Activated naive CD4-positive, alpha-beta T cell treated with anti-CD3 and anti-CD28 coated beads for 36 hours (primary cell): ENCODE measurements at regions of chr20 and their contacts with region 1.

Region 1: DNA sequence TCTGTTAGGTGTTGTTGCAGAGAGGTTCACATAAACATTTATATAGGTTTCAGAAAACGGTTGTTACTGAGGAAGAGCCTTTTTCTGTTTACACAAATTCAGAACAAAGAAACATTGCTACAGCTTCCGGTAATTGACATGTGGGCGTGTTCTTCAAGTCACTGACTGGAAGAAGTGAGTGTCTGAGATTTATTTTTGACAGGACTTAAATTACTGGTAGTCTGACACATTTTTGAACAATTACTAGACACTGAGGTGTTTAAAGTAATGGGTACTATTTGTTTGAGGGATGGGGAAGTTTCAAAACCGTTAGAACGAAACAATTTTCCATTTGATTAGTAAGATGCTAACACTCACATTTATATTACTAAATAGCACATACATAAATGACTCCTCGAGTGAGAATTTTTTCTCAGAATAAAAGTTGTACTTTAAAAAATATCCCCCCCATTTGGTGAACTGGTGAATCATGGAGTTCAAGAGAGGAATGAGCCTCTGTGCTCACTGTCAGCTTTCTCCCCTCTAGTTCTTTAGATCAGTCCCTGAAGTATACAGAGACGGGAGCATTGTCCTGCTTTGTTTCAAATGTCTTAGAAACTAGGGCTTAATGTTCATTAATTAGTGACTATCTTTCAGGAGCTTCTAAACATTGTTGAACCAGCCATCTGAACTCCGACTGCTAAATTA is 98.7 kb downstream of the TSHZ2 start:
- DNase-seq: peak; percentile 80
- H3K4me3 Mint-ChIP-seq: peak overlapping the region; percentile 18
- H3K27ac Mint-ChIP-seq: peak overlapping the region; percentile 98
- H3K4me1 Mint-ChIP-seq: peaks cover 63% of the 10 kb centered on the region
- H3K27me3 Mint-ChIP-seq: no peaks in the 10 kb centered on the region

Region 2: DNA sequence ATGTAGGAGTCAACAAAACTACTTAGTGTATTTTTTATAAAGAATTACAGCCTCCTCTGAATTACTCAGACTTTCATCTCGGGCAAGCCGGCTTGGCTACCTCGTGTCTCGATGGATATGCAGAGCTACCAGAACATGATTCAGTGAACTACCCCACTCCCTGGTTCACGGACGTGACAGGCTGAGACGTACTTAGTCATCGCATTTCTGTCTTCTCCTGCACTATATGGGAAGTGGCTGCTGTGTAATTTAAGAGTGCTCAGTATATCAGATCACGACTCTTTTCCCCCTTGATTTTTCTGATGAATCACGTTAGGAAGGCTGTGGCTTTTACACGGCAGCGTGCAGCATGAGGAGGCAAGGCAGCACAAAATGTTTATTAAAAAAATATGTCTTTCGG is 576.6 kb before region 1 on chr20:
- CTCF ChIA-PET with region 1: no interaction called
- intact Hi-C with region 1: loop called (anchors 1 kb)
- DNase-seq: peak; percentile 82
- H3K4me3 Mint-ChIP-seq: peak overlapping the region; percentile 46
- H3K27ac Mint-ChIP-seq: peak overlapping the region; percentile 50
- H3K4me1 Mint-ChIP-seq: peaks cover 23% of the 10 kb centered on the region
- H3K27me3 Mint-ChIP-seq: no peaks in the 10 kb centered on the region

Region 3: DNA sequence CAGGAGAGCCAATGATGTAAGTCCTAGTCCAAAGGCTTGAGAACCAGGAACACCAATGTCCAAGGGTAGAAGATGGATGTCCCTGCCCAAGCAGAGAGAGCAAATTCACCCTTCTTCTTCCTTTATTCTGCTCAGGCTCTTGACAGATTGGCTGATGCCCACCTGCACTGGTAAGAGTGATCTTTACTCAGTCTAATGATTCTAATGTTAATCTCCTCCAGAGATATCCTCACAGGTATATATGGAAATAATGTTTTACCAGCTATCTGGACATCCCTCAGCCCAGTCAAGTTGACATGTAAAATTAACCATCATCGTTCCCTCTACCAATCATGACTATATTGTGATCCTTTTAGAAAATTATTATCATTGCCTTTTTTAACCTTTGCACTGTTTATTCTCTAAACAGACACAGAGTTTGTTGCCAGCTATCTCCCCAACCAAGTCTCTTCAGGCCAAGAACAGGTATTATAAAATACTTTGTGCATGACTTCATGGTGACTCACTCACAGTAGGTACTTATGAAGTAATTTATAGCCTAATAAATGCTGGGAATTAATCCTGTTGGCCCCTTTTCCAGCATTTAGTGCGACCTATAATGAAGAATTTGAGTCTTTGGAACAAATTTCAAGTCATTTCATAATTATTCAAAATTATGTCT is 124.9 kb before region 1 on chr20:
- CTCF ChIA-PET with region 1: no interaction called
- intact Hi-C with region 1: no loop called
- DNase-seq: no peak
- H3K4me3 Mint-ChIP-seq: no peak overlapping the region
- H3K27ac Mint-ChIP-seq: no peak overlapping the region
- H3K4me1 Mint-ChIP-seq: peaks cover 4% of the 10 kb centered on the region
- H3K27me3 Mint-ChIP-seq: no peaks in the 10 kb centered on the region

Region 4: DNA sequence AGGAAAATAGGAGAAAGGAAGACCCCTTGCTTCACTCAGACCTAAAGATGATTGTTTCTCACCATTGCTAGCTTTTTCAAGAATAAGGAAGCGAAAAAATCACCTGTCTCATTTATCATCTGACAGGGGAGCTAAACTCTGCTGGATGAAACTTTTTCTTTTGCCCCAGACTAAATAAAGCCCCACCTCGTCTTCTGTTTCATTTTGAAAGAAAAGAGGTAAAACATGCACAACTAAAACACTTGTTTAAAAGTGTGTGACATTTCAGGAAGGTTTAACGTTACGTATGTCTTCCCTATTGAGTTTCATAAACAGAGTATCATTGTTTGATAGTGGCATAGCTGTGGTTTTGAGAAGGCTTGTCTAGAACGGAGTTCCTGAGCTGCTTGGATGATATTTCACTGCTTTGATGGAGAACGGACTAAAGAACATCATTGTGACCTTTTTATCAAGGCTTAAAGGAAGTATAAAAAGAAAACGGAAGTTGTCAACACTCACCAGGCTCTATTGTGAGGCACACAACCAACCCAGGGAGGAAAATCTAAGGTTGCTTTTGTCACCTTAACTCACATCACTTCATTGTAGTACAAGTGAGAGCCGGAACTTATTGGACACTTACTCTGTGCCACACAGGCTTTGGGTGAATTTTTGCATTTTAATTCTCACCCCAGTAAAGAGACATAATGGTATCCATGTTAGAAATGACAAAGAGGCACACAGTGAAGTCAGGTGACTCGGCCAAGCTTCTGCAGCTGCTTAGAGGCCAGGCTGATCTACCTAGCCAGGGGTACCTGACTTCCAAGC is 69.1 kb before region 1 on chr20:
- CTCF ChIA-PET with region 1: interaction called, 3 read pairs
- intact Hi-C with region 1: loop called (anchors 1 kb)
- DNase-seq: peak; percentile 60
- H3K4me3 Mint-ChIP-seq: peak overlapping the region; percentile 71
- H3K27ac Mint-ChIP-seq: peak overlapping the region; percentile 99
- H3K4me1 Mint-ChIP-seq: peaks cover 88% of the 10 kb centered on the region
- H3K27me3 Mint-ChIP-seq: no peaks in the 10 kb centered on the region

Region 5: GRCh38 chr20:53050338-53050737 is 20.5 kb before region 1 on chr20:
- CTCF ChIA-PET with region 1: interaction called, 3 read pairs
- intact Hi-C with region 1: loop called (anchors 1 kb)
- DNase-seq: peak; percentile 70
- H3K4me3 Mint-ChIP-seq: no peak overlapping the region
- H3K27ac Mint-ChIP-seq: peak overlapping the region; percentile 50
- H3K4me1 Mint-ChIP-seq: peaks cover 38% of the 10 kb centered on the region
- H3K27me3 Mint-ChIP-seq: no peaks in the 10 kb centered on the region

Region 6: DNA sequence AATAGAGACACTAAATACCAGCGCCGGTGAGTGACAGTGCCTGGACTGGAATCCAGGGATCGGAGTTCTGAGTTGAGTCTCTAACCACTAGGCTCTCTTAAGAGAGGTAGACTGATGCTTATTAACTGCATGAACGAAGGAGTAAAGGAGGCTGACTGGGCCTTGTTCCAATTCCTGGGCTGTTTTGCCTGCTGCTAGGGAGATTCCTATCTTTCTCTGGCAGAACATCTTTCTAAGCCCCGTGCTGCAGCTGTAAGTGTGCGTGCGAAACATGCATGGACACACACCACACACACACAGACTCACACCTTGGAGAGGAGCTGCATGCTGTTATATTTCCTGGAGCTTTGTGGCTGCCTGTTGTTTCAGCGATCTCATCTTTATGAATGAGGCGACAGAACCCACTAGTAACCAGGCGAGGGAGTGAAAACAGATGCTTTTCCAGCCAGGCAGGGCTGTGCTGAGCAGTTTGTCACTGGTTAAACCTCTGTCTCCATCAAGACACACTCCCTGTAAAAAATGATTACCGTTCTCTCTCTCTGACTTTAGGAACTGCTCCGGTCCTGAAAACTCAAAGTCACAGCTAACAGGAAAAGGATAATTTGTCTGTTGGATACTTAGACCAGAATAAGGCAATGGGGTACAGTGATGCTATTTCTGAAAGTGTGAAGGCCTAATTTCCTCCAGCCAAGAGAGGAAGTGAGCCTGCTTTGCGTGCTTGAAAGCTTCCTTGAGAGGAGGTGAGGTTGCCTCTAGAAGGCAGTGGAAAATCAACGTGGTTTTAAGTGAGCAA is 680.2 kb after region 1 on chr20:
- CTCF ChIA-PET with region 1: no interaction called
- intact Hi-C with region 1: loop called (anchors 5 kb)
- DNase-seq: peak; percentile 66
- H3K4me3 Mint-ChIP-seq: peak overlapping the region; percentile 32
- H3K27ac Mint-ChIP-seq: peak overlapping the region; percentile 91
- H3K4me1 Mint-ChIP-seq: peaks cover 71% of the 10 kb centered on the region
- H3K27me3 Mint-ChIP-seq: no peaks in the 10 kb centered on the region